ENCODE measurements at regions of chr2 and their contacts with region 1.

Region 1: GRCh38 chr2:66434679-66435548 is at the start of gene MEIS1:
- DNase-seq: peak; percentile 95
- H3K4me3 ChIP-seq: peak within 1 kb of the TSS; percentile 64 to 97 (median 97)
- H3K27ac ChIP-seq: peak within 1 kb of the TSS; percentile 87
- H3K4me1 ChIP-seq: peaks cover 23% of the 10 kb centered on the region
- H3K27me3 ChIP-seq: peaks cover 0 to 6% of the 10 kb centered on the region in 2 experiments
- CTCF ChIP-seq: no peak
- POLR2A ChIP-seq: peak; percentile 90
- total RNA-seq, gene MEIS1: 26.3 and 26.5 TPM in 2 replicates

Region 2: GRCh38 chr2:65432227-65433190 is 1002.4 kb before region 1 on chr2 and contains the start of gene SPRED2:
- CTCF ChIA-PET with region 1: no interaction called
- POLR2A ChIA-PET with region 1: no interaction called
- dilution Hi-C with region 1: no loop called
- intact Hi-C with region 1: loop called (anchors 10 kb)
- DNase-seq: peak; percentile 90
- H3K4me3 ChIP-seq: peak within 1 kb of the TSS; percentile 72 to 82 (median 73)
- H3K27ac ChIP-seq: peak within 1 kb of the TSS; percentile 7
- H3K4me1 ChIP-seq: peaks cover 17% of the 10 kb centered on the region
- H3K27me3 ChIP-seq: peaks cover 20 to 41% of the 10 kb centered on the region in 2 experiments
- CTCF ChIP-seq: no peak
- POLR2A ChIP-seq: peak; percentile 53
- total RNA-seq, gene SPRED2: 7.8 and 9.6 TPM in 2 replicates

Region 3: GRCh38 chr2:66509326-66509811 is 74.5 kb after region 1 on chr2:
- CTCF ChIA-PET with region 1: interaction called, 5 read pairs
- POLR2A ChIA-PET with region 1: interaction called, 3 read pairs
- dilution Hi-C with region 1: no loop called
- intact Hi-C with region 1: loop called (anchors 1 kb)
- DNase-seq: peak; percentile 88
- H3K4me3 ChIP-seq: peak overlapping the region in 1 of 3 experiments; percentile 28
- H3K27ac ChIP-seq: peak overlapping the region; percentile 91
- H3K4me1 ChIP-seq: peaks cover 36% of the 10 kb centered on the region
- H3K27me3 ChIP-seq: no peaks in the 10 kb centered on the region
- CTCF ChIP-seq: no peak
- POLR2A ChIP-seq: no peak

Region 4: DNA sequence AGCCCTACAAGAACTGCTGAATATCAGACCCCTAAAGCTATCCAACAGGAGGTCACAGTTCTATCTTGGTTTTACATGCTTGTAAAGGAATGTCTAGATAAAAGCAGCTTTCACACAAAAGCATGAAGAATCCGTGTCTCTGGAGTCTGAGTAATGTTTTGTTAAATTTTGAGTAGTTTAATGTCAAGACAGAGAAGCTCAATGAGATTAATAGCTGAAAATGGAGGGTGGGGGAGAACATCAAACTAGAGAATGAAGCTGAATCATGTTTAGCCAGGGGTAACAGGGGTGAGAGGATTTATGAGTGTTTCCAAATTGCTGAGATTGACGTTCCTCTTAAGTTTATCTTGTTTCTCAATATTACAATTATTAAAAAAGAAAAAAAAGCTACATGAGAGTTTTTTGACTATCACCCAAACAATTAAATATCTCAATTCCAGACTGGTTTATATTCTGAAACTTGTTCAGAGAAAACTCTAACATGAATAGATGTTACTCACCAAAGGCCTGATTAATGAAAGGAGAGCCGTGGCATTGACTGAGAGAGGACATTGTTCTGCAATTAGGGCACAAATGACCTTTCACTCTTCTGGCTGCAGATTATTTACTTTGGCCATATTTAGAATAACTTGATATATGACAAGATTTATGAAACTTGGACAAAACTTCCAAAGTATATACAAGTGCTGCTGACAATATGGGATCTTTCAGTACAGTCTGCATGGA is 695.8 kb after region 1 on chr2:
- CTCF ChIA-PET with region 1: interaction called, 3 read pairs
- POLR2A ChIA-PET with region 1: no interaction called
- dilution Hi-C with region 1: no loop called
- intact Hi-C with region 1: loop called (anchors 10 kb)
- DNase-seq: peak; percentile 94
- H3K4me3 ChIP-seq: no peak overlapping the region
- H3K27ac ChIP-seq: peak overlapping the region; percentile 26
- H3K4me1 ChIP-seq: peaks cover 10% of the 10 kb centered on the region
- H3K27me3 ChIP-seq: no peaks in the 10 kb centered on the region
- CTCF ChIP-seq: no peak
- POLR2A ChIP-seq: peak; percentile 42

Region 5: GRCh38 chr2:67650291-67651133 is 1215.6 kb after region 1 on chr2:
- CTCF ChIA-PET with region 1: interaction called, 12 read pairs
- POLR2A ChIA-PET with region 1: interaction called, 4 read pairs
- dilution Hi-C with region 1: no loop called
- intact Hi-C with region 1: loop called (anchors 2 kb)
- DNase-seq: peak; percentile 65
- H3K4me3 ChIP-seq: no peak overlapping the region
- H3K27ac ChIP-seq: no peak overlapping the region
- H3K4me1 ChIP-seq: no peaks in the 10 kb centered on the region
- H3K27me3 ChIP-seq: no peaks in the 10 kb centered on the region
- CTCF ChIP-seq: peak; percentile 55 to 67
- POLR2A ChIP-seq: no peak

Region 6: GRCh38 chr2:67871686-67872412 is 1436.9 kb after region 1 on chr2:
- CTCF ChIA-PET with region 1: no interaction called
- POLR2A ChIA-PET with region 1: no interaction called
- dilution Hi-C with region 1: no loop called
- intact Hi-C with region 1: loop called (anchors 2 kb)
- DNase-seq: peak; percentile 84
- H3K4me3 ChIP-seq: peak overlapping the region in 1 of 3 experiments; percentile 37
- H3K27ac ChIP-seq: peak overlapping the region; percentile 100
- H3K4me1 ChIP-seq: peaks cover 38% of the 10 kb centered on the region
- H3K27me3 ChIP-seq: no peaks in the 10 kb centered on the region
- CTCF ChIP-seq: no peak
- POLR2A ChIP-seq: no peak

Region 7: DNA sequence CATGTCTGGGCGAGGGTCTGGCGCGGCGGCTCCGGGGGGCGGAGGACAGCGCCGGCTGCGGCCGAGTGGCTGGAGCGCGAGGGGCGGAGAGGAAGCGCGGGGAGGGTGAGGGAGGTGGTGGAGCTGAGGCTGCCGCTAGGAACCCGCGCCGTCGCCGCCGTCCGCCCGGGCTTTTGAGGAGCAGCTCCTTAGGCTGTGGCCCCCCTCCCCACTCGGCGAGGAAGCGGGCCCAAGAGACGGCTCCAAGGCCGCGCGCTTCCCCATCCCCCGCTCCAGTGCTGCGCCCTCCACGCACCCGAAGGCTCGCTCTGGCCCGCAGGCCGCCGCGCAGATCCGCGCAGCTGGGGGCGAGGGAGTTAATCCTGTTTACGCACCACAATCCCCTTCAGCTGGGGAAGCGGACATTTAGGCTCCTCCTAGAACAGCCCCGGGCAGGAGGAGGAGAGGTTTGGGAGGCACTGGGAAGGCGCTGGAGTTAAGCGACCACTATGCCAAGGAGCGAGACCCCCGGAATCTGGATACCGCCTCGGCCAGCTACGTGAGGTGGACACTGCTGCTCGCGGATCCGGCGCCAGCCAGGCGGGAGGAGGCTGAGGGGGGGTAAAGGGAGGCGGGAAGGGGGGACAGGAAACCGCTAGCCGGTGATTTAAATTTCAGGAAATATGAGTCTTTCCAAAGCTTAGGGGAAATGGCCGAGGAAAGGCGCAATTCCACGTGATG is 1884.6 kb after region 1 on chr2 and contains the start of gene CNRIP1:
- CTCF ChIA-PET with region 1: no interaction called
- POLR2A ChIA-PET with region 1: interaction called, 12 read pairs
- dilution Hi-C with region 1: no loop called
- intact Hi-C with region 1: no loop called
- DNase-seq: peak; percentile 94
- H3K4me3 ChIP-seq: peak within 1 kb of the TSS; percentile 60 to 83 (median 79)
- H3K27ac ChIP-seq: peak within 1 kb of the TSS; percentile 99
- H3K4me1 ChIP-seq: peaks cover 22% of the 10 kb centered on the region
- H3K27me3 ChIP-seq: no peaks in the 10 kb centered on the region
- CTCF ChIP-seq: no peak
- POLR2A ChIP-seq: no peak
- total RNA-seq, gene CNRIP1: 73.8 and 74.6 TPM in 2 replicates

Measured in endothelial cell of umbilical vein (primary cell).